ENCODE measurements at regions of chr6 and their contacts with region 1.

Region 1: DNA sequence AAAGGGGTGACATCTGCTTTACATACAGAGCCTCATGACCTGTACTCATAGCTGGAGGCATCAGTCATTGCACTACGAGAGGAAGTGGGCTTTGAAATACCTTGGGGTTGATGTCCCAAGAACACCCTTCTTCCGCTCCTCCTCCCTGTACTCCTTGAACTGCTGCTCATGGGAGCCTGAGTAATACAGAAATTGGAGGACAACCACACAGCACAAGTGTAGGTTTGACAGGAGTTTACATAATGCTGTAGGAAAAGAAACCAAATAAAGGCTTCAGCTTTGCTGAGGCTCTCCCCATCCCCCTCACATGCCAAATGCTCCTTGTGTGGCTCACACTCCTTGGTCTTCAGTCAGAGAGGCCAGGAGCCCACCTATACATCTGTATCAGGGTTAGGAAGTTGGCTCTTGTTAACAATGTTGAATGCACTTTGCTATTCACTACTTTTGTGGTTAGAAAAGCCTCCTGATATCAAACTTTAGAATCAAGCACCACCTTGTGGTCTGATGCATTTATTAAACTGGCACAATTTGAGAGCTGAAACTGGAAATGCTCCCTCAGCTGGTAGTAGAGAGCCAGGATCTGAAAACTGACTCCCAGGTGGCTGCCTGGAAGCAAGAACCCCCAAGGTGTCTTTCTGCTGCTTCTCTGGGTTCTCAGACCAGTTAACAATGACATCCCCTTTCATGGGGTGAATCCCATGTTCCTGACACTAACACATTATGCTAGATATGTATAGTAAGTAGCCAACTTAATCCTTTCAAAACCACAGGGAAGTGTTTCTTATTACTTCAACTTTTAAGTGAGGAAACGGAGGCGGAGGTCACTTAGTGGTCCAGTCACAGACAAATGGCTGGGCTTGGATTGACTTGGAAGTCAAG is 56.2 kb upstream of the EDN1 start:
- DNase-seq: peak; percentile 52
- H3K4me3 ChIP-seq: no peak overlapping the region
- H3K27ac ChIP-seq: no peak overlapping the region
- H3K4me1 ChIP-seq: peaks cover 3 to 4% of the 10 kb centered on the region in 2 experiments; a peak in 1 of 4 replicates
- H3K27me3 ChIP-seq: no peaks in the 10 kb centered on the region
- CTCF ChIP-seq: peak; percentile 89
- EP300 ChIP-seq: no peak
- RAD21 ChIP-seq: peak; percentile 92

Region 2: DNA sequence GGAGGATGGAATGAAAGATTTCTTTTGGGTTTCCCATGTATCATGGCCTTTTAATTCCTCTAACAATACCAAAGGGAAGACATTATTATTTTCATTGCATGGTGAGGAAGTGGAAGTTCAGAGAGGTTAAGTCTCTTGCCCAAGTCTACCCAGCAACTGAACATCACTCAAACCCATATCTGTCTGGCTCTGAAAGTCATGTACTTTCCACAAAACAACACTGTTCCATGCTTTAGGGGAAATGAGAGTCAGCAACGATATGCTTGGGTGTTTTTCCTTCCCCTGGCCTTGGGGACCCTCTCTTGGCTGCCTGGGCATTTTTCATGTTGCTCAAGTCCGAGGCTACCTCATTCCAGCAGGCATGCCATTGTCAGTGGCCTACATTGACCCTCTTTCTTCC is 574.2 kb before region 1 on chr6:
- CTCF ChIA-PET with region 1: interaction called, 78 read pairs
- POLR2A ChIA-PET with region 1: no interaction called
- DNase-seq: no peak
- H3K4me3 ChIP-seq: no peak overlapping the region
- H3K27ac ChIP-seq: no peak overlapping the region
- H3K4me1 ChIP-seq: peaks cover 2 to 10% of the 10 kb centered on the region in 2 experiments; a peak in 1 of 4 replicates
- H3K27me3 ChIP-seq: no peaks in the 10 kb centered on the region
- CTCF ChIP-seq: no peak
- EP300 ChIP-seq: no peak
- RAD21 ChIP-seq: no peak

Region 3: DNA sequence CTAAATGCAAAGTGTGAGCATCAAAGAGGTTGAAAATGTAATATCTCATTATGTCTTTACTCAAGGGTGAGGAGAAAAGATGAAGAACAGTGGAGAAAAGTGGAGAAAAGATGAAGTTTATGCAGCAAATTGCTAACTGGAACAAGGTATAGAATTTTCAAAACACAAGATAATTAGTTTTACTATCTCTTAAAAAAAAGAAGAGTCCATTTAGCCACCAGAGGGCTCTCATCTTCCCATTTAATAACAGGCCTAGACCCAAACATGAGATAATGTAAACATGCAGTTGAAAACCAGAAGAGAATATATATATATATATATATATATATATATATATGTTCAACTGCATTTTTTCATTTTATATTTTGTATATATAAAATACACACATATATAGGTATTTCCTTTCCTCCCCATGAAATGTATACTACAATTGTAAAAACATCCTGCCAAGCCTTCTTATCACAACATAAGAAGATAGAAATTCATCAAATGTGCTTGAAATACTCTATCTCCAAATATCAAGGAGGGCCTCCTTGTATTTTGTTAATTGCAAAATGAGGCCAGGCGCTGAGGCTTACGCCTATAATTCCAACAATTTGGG is 533.7 kb before region 1 on chr6:
- CTCF ChIA-PET with region 1: interaction called, 19 read pairs
- POLR2A ChIA-PET with region 1: no interaction called
- DNase-seq: peak; percentile 50
- H3K4me3 ChIP-seq: no peak overlapping the region; a peak in 1 of 4 replicates
- H3K27ac ChIP-seq: no peak overlapping the region
- H3K4me1 ChIP-seq: peaks cover 0 to 7% of the 10 kb centered on the region in 2 experiments; a peak in 1 of 4 replicates
- H3K27me3 ChIP-seq: no peaks in the 10 kb centered on the region
- CTCF ChIP-seq: peak; percentile 67
- EP300 ChIP-seq: no peak
- RAD21 ChIP-seq: peak; percentile 66

Region 4: DNA sequence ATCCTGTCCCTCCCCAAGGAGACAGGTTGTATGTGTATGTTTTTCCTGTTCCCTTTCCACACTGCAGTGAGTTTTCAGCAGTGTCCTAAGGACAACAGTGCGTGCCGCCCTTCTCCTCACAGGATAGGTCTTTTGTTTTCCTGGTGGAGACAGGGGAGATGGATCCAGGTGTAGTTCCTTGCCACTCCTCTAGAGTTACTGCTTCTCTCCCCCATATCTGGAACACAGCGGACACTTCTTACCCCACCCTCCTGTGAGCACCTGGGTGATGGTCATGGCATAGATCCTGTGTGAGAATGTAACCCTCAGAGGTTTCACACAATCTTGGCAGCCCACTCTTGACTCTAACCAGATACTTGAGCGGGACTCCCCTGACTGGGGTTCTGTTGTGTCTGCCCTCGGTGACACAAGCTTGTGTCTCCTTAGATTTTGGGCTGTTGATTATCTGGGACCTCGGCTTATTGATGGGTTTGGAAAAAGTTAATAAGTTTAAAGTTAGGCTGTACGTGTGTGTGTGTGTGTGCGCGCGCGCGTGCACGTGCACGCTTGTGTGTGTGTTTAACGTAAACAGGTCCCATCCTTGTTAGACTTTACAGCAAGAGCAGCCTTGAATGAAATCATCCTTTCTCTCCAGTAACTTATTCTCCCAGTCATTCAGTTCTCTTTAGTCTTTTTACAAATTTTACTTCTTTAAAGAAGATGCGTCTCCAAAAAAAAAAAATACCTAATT is 75.1 kb before region 1 on chr6:
- CTCF ChIA-PET with region 1: no interaction called
- POLR2A ChIA-PET with region 1: no interaction called
- DNase-seq: no peak
- H3K4me3 ChIP-seq: no peak overlapping the region
- H3K27ac ChIP-seq: no peak overlapping the region
- H3K4me1 ChIP-seq: no peaks in the 10 kb centered on the region
- H3K27me3 ChIP-seq: no peaks in the 10 kb centered on the region
- CTCF ChIP-seq: no peak
- EP300 ChIP-seq: no peak
- RAD21 ChIP-seq: no peak

Region 5: DNA sequence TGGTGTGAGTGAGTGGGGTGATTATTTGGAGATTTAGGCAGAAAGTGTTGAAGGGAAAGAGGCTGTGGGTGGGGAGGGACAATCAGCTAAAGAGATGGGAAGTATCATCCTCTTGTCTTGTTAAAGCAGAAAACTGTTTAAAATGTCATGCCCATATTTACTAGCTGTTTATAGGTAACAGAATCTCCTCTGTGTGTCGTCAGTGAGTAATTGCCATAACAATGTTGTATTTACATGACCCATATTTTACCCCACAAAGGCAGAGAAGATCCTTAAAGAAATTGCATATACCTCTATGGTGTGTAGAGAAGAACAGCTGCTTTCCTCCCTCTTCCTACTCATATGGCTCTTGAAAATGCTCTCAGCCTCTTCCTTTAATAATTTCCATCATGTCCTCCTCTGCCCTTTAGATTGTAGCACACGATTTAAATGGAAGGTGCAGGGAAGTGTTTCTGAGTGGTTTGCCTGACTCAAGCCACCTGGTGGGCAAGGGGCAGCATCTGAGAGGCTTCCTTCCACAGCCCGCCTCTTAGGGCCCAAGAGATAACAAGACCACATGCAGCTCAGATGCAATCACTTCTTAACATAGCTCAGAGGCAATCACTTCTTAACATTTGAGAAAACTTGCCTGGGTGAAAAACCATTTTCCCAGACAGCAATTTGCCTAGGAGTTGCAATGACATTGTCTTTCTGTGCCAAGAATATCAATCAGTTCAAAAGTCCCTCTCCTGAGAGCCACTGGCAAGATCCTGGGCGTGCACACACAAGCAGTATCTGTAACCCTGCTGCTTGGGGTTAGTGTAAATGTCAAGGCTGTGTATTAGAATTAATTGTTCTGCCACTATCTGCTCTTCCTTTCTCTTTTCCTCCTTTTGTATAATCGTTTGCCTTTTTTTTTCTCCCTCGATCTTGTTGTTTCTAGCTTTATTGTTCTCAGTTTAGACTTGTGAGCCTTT is 12.1 kb after region 1 on chr6:
- CTCF ChIA-PET with region 1: interaction called, 10 read pairs
- POLR2A ChIA-PET with region 1: no interaction called
- DNase-seq: no peak
- H3K4me3 ChIP-seq: no peak overlapping the region
- H3K27ac ChIP-seq: no peak overlapping the region
- H3K4me1 ChIP-seq: no peaks in the 10 kb centered on the region; a peak in 1 of 4 replicates
- H3K27me3 ChIP-seq: no peaks in the 10 kb centered on the region
- CTCF ChIP-seq: no peak
- EP300 ChIP-seq: no peak
- RAD21 ChIP-seq: no peak

Region 6: GRCh38 chr6:12313992-12314805 is 80.3 kb after region 1 on chr6:
- CTCF ChIA-PET with region 1: no interaction called
- POLR2A ChIA-PET with region 1: no interaction called
- DNase-seq: no peak
- H3K4me3 ChIP-seq: no peak overlapping the region
- H3K27ac ChIP-seq: peak overlapping the region in 1 of 2 experiments; percentile 41; a peak in 3 of 4 replicates
- H3K4me1 ChIP-seq: no peaks in the 10 kb centered on the region
- H3K27me3 ChIP-seq: no peaks in the 10 kb centered on the region
- CTCF ChIP-seq: no peak
- EP300 ChIP-seq: peak in 1 of 2 experiments; percentile 37; a peak in 1 of 4 replicates
- RAD21 ChIP-seq: no peak

Region 7: DNA sequence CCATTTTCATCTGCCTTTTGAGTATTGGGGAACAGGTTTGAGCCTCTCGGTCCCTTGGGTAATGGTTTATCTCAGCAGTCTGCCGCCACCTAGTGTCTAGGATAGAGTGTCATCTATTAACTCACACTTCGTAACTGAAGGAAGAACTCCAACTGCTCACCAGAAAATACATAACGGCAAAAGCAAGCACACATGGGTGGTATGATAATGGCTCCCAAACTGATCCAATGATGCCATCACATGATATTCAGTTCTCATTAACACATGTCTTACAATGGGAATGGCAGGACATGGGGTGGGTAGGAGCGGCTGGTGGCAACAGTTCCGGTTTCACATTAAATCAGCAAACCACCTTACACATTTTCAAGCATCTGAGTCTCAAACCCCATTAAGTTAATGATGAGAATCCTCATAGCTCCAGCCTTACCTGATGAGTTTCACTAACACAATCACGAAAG is 372.0 kb after region 1 on chr6:
- CTCF ChIA-PET with region 1: interaction called, 16 read pairs
- POLR2A ChIA-PET with region 1: no interaction called
- DNase-seq: peak; percentile 57
- H3K4me3 ChIP-seq: no peak overlapping the region
- H3K27ac ChIP-seq: no peak overlapping the region
- H3K4me1 ChIP-seq: peaks cover 2 to 12% of the 10 kb centered on the region in 2 experiments; a peak in 2 of 4 replicates
- H3K27me3 ChIP-seq: no peaks in the 10 kb centered on the region
- CTCF ChIP-seq: peak; percentile 81
- EP300 ChIP-seq: no peak
- RAD21 ChIP-seq: peak; percentile 87

Measured in SK-N-SH (cell line).